ENCODE measurements at regions of chr14 and their contacts with region 1.

Region 1: GRCh38 chr14:49867831-49868723 is 15.5 kb upstream of the NEMF start:
- DNase-seq: peak; percentile 93 to 99 (median 97)
- H3K4me3 ChIP-seq: peak overlapping the region; percentile 76
- H3K4me3 Mint-ChIP-seq: peak overlapping the region; percentile 77 to 93 (median 89)
- H3K27ac ChIP-seq: peak overlapping the region; percentile 75
- H3K27ac Mint-ChIP-seq: peak overlapping the region; percentile 92 to 99 (median 98)
- H3K4me1 ChIP-seq: peaks cover 40% of the 10 kb centered on the region
- H3K4me1 Mint-ChIP-seq: peaks cover 17 to 30% (median 17%) of the 10 kb centered on the region in 3 donors
- H3K27me3 ChIP-seq: no peaks in the 10 kb centered on the region
- H3K27me3 Mint-ChIP-seq: no peaks in the 10 kb centered on the region

Region 2: GRCh38 chr14:49092345-49092744 is 775.7 kb before region 1 on chr14:
- CTCF ChIA-PET with region 1: no interaction called
- POLR2A ChIA-PET with region 1: no interaction called
- DNase-seq: no peak
- H3K4me3 ChIP-seq: no peak overlapping the region
- H3K4me3 Mint-ChIP-seq: no peak overlapping the region
- H3K27ac ChIP-seq: no peak overlapping the region
- H3K27ac Mint-ChIP-seq: no peak overlapping the region
- H3K4me1 ChIP-seq: no peaks in the 10 kb centered on the region
- H3K4me1 Mint-ChIP-seq: no peaks in the 10 kb centered on the region
- H3K27me3 ChIP-seq: no peaks in the 10 kb centered on the region
- H3K27me3 Mint-ChIP-seq: no peaks in the 10 kb centered on the region

Region 3: DNA sequence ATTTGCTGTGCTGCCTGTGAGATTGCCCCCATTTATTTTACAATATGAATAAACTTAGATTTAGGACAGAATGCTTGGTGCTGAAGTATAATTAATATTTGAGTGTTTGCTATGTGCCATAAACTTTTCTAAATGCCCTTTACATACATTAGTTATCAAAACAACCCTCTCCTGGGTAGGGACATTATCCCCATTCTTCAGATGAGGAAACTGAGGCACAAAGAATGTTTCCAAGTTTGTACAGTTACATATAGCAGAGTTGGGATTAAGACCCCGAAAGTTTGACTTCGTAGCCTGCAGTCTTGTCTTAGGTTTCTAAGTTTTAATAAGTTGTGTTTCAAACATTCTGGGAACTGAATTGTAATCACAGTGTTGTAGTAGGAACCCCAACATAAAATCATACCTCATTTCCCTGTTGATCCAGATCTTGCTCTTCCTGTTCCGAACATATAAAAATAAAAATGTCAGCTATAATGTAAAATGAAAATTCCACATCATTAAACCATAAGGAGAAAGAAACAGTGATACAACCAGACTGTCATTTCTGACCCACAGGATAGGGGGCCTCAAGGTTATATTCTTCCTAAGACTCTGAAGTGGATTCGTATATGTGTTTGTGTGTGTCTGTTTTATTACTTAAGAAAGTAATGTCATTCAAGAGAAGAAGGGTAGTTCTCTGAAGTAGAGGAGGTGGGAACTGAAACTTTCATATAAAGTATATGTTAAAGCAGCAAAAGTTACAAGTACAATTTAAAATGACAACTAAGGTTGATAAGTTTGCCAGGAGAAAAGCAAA is 81.6 kb before region 1 on chr14:
- CTCF ChIA-PET with region 1: no interaction called
- POLR2A ChIA-PET with region 1: no interaction called
- DNase-seq: no peak
- H3K4me3 ChIP-seq: no peak overlapping the region
- H3K4me3 Mint-ChIP-seq: no peak overlapping the region
- H3K27ac ChIP-seq: no peak overlapping the region
- H3K27ac Mint-ChIP-seq: peak overlapping the region in 1 of 8 donors; percentile 8
- H3K4me1 ChIP-seq: no peaks in the 10 kb centered on the region
- H3K4me1 Mint-ChIP-seq: peaks cover 0 to 4% (median 0%) of the 10 kb centered on the region in 3 donors
- H3K27me3 ChIP-seq: no peaks in the 10 kb centered on the region
- H3K27me3 Mint-ChIP-seq: no peaks in the 10 kb centered on the region

Region 4: DNA sequence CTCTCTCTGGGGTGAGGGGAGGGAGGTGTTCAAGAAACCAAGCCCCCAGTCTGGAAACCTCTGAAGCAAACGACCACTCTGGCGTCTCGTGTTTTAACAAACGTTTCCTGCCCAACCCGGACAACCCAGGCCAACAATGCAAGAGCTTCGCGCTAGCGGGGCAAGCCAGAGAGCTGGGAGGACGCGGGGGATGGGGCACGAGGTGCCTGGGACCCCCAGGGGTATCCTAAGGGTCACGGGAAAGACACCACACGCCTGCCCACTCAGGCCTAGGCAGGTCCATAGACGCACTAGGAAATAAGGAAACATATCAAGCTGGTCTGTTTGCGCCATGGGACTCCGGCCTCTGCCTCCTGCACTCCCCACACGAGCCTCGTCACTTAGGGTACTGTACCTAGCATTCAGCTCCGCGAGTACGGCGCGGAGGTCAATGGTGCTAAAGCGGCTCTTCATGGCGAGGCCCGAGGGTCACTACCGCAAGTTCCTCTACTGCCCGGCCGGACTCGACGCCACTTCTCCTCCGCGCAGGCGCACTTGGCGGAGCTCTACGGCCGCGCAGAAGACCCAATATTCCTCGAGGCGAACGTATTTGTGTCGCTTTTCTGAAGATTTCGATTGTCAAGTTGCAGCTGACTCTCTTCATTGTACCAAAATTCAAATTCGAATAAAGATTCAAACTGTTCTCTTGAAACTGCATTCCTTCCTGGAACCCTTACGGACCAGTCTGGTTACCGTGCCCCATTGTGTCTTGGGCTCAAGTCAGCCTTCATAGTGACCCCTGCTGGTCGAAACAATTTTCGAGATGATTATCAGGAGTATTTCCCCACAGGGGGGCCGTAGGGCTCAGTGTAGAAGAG is 15.5 kb before region 1 on chr14 and contains the start of gene NEMF:
- CTCF ChIA-PET with region 1: interaction called, 203 read pairs
- POLR2A ChIA-PET with region 1: interaction called, 73 read pairs
- DNase-seq: peak; percentile 59 to 82 (median 72)
- H3K4me3 ChIP-seq: peak within 1 kb of the TSS; percentile 93
- H3K4me3 Mint-ChIP-seq: peak within 1 kb of the TSS; percentile 94 to 99 (median 96)
- H3K27ac ChIP-seq: peak within 1 kb of the TSS; percentile 79
- H3K27ac Mint-ChIP-seq: peak within 1 kb of the TSS; percentile 83 to 99 (median 96)
- H3K4me1 ChIP-seq: peaks cover 28% of the 10 kb centered on the region
- H3K4me1 Mint-ChIP-seq: peaks cover 40 to 51% (median 50%) of the 10 kb centered on the region in 3 donors
- H3K27me3 ChIP-seq: no peaks in the 10 kb centered on the region
- H3K27me3 Mint-ChIP-seq: no peaks in the 10 kb centered on the region
- total RNA-seq, gene NEMF: 69.2 to 71.9 TPM

Region 5: DNA sequence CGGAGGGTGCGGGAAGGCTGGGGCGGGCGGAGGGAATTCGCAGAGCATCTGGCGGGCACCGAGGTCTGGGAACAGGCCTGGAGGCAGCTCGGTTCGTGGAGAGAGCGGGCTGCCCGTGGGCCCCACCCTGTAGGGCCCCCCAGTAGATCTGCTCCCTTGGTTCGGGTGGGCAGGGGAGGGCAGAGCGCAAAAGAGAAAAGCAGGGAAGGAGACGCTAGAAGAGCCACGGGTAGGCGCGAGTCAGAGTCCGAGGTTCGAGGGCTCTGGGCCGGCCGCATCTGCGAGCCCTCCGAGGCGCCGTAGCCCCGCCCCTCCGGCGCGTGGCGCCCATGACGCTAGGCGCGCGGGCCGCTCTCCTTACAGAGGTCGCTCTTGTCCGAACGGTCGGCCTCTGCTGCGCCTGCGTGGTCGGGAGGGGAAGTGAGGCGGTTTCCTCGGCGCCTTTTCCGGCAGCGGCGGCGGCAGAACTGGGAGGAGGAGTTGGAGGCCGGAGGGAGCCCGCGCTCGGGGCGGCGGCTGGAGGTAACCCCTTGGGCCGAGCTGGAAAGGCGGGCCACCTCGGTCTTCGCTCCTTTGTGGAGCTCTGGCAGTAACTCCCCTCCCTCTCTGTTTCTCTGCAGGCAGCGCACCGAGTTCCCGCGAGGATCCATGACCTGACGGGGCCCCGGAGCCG is 24.7 kb after region 1 on chr14 and contains the start of gene ARF6:
- CTCF ChIA-PET with region 1: interaction called, 28 read pairs
- POLR2A ChIA-PET with region 1: interaction called, 26 read pairs
- DNase-seq: peak; percentile 92 to 96 (median 94)
- H3K4me3 ChIP-seq: peak within 1 kb of the TSS; percentile 85
- H3K4me3 Mint-ChIP-seq: peak within 1 kb of the TSS; percentile 92 to 100 (median 99)
- H3K27ac ChIP-seq: peak within 1 kb of the TSS; percentile 97
- H3K27ac Mint-ChIP-seq: peak within 1 kb of the TSS; percentile 97 to 100 (median 99)
- H3K4me1 ChIP-seq: peaks cover 31% of the 10 kb centered on the region
- H3K4me1 Mint-ChIP-seq: peaks cover 30 to 44% (median 32%) of the 10 kb centered on the region in 3 donors
- H3K27me3 ChIP-seq: no peaks in the 10 kb centered on the region
- H3K27me3 Mint-ChIP-seq: peaks cover 0 to 1% of the 10 kb centered on the region in 2 donors
- total RNA-seq, gene ARF6: 168 TPM

Region 6: DNA sequence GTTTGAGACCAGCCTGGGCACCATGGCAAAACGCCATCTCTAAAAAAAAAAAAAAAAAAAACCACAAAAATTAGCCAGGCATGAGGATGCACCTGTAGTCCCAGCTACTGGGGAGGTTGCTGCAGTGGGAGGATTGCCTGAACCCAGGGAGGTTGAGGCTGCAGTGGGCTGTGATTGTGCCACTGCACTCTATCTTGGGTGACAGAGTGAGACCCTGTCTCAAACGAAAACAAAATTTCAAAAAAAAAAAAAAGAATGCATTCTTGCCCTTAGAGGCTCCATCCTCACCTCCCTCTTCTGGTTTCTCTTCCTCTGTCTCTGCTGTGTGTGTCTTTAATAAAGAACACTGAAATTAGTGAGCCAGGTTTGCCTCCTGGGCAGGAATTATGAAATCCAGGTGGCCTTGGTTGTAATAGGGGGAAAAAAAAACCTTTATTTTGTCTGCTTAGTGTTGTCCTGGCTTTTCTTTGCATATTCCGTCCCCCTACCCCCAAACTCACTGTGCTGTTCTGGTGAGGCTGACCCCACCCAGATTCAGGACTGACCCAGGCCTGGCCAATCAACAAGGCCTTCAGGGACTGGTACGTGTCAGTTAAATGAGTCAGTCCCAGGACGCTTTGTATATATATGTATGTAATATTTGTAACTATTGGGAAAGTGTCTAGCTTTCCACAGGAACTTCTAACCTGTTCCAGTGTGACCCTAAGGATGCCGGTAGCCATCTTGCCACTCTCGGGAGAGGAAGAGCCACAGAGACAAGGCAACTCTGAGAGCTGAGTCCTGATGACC is 140.7 kb after region 1 on chr14:
- CTCF ChIA-PET with region 1: interaction called, 163 read pairs
- POLR2A ChIA-PET with region 1: interaction called, 71 read pairs
- DNase-seq: no peak
- H3K4me3 ChIP-seq: no peak overlapping the region
- H3K4me3 Mint-ChIP-seq: no peak overlapping the region
- H3K27ac ChIP-seq: no peak overlapping the region
- H3K27ac Mint-ChIP-seq: peak overlapping the region in 1 of 8 donors; percentile 19
- H3K4me1 ChIP-seq: peaks cover 4% of the 10 kb centered on the region
- H3K4me1 Mint-ChIP-seq: peaks cover 8 to 27% (median 22%) of the 10 kb centered on the region in 3 donors
- H3K27me3 ChIP-seq: no peaks in the 10 kb centered on the region
- H3K27me3 Mint-ChIP-seq: no peaks in the 10 kb centered on the region

Region 7: GRCh38 chr14:50095895-50096294 is 227.8 kb after region 1 on chr14:
- CTCF ChIA-PET with region 1: interaction called, 89 read pairs
- POLR2A ChIA-PET with region 1: interaction called, 5 read pairs
- DNase-seq: peak in 2 of 5 donors; percentile 43 to 57
- H3K4me3 ChIP-seq: peak overlapping the region; percentile 39
- H3K4me3 Mint-ChIP-seq: peak overlapping the region; percentile 2 to 66 (median 62)
- H3K27ac ChIP-seq: no peak overlapping the region
- H3K27ac Mint-ChIP-seq: peak overlapping the region; percentile 20 to 96 (median 88)
- H3K4me1 ChIP-seq: peaks cover 70% of the 10 kb centered on the region
- H3K4me1 Mint-ChIP-seq: peaks cover 52 to 67% (median 65%) of the 10 kb centered on the region in 3 donors
- H3K27me3 ChIP-seq: no peaks in the 10 kb centered on the region
- H3K27me3 Mint-ChIP-seq: peaks cover 0 to 1% of the 10 kb centered on the region in 2 donors

Region 8: DNA sequence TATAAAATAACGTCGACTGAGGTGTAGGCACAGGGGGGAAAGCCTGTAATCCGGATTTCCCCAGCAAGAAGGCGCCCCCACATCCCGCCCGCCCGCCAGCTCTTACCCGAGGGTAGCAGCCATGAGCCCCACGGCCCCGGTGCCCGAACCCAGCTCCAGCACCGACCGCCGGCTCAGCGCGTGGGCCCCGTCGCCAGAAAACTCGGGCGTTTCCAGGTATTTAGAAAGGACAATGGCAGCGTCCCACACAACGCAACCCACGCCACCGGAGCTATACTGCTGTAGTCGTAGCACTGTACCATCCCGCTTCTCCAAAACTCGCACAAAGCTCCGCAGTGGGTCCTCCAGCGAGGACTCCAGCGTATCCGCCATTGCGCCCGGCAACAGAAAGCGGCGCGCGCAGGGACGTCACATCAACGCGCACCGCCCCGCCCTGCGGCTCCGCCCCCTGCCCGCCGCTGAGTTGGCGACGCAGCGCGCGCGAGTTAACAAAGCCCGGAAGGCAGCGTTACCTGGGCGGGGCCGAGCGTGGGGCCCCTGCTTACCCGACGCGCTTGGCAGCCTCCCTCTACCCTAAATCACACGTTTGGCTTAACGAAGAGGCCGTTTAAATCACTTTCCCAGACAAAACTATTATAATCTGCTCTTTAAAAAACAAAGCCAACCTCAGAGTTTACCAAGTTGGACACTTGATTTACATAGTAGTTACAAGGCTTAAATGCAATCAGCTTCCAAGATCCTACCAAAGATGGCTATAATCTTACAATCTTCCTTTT is 248.3 kb after region 1 on chr14 and contains the start of gene VCPKMT:
- CTCF ChIA-PET with region 1: interaction called, 29 read pairs
- POLR2A ChIA-PET with region 1: interaction called, 24 read pairs
- DNase-seq: peak; percentile 93 to 97 (median 96)
- H3K4me3 ChIP-seq: peak within 1 kb of the TSS; percentile 40
- H3K4me3 Mint-ChIP-seq: peak within 1 kb of the TSS; percentile 95 to 97 (median 97)
- H3K27ac ChIP-seq: peak within 1 kb of the TSS; percentile 78
- H3K27ac Mint-ChIP-seq: peak within 1 kb of the TSS; percentile 94 to 99 (median 99)
- H3K4me1 ChIP-seq: peaks cover 26% of the 10 kb centered on the region
- H3K4me1 Mint-ChIP-seq: peaks cover 23 to 42% (median 29%) of the 10 kb centered on the region in 3 donors
- H3K27me3 ChIP-seq: no peaks in the 10 kb centered on the region
- H3K27me3 Mint-ChIP-seq: no peaks in the 10 kb centered on the region
- total RNA-seq, gene VCPKMT: 16.5 to 19.9 TPM

Measured in CD8-positive, alpha-beta memory T cell (primary cell).